ENCODE measurements at regions of chr2 and their contacts with region 1.

Region 1: DNA sequence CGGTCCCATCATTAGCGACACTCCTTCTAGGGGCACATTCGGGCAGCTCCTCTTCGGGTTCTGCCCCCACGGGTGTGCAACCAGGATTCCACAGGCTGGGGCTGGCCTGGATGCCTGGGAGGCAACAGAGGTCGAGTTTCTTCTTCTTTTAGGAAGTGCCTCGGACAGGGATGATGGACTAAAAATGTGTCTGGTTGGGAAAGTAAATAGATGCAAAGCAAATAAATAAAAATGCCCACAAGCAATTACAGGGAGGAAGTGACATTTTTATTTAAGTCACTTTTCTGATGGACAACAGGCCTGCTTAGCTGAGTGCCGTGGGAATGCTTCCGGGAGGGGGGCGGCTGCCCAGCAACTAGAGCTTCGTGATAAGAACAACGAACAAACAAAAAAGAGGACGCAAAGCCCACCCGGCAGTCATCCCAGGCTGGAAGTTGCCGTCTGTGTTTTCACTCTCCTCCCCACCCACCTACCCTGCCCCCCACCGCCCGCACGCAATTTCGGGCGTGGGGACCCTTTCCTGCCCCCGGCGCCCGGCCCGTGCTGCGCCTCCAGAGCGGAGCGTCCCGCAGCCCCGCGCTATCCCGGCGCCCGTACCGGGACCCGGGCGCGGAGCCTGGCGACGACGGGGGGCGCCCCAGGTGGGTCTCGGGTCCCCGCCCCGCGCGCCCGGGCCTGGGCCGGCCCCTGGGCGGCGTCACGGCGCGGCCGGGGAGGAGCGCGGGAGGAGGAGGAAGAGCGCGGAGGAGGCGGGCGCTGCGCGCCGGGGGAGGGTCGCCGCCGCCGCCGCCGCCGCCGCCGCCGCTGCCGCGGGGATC is 412 bp upstream of the NCK2 start:
- DNase-seq: peak; percentile 79
- ATAC-seq: peak; percentile 86
- H3K4me3 Mint-ChIP-seq: peak overlapping the region; percentile 86
- H3K27ac Mint-ChIP-seq: peak overlapping the region; percentile 86
- H3K4me1 Mint-ChIP-seq: peaks cover 76% of the 10 kb centered on the region
- H3K27me3 Mint-ChIP-seq: no peaks in the 10 kb centered on the region
- CTCF ChIP-seq: no peak

Region 2: GRCh38 chr2:105337124-105338019 is 406.9 kb before region 1 on chr2 and contains the start of gene C2orf49:
- CTCF ChIA-PET with region 1: no interaction called
- POLR2A ChIA-PET with region 1: no interaction called
- intact Hi-C with region 1: loop called (anchors 5 kb)
- DNase-seq: peak; percentile 89
- ATAC-seq: peak; percentile 93
- H3K4me3 Mint-ChIP-seq: peak within 1 kb of the TSS; percentile 100
- H3K27ac Mint-ChIP-seq: peak within 1 kb of the TSS; percentile 100
- H3K4me1 Mint-ChIP-seq: peaks cover 32% of the 10 kb centered on the region
- H3K27me3 Mint-ChIP-seq: no peaks in the 10 kb centered on the region
- CTCF ChIP-seq: no peak
- total RNA-seq, gene C2orf49: 20.0 and 23.8 TPM in 2 replicates

Region 3: GRCh38 chr2:105732101-105732500 is 12.2 kb before region 1 on chr2:
- CTCF ChIA-PET with region 1: no interaction called
- POLR2A ChIA-PET with region 1: no interaction called
- intact Hi-C with region 1: no loop called
- DNase-seq: no peak
- ATAC-seq: no peak
- H3K4me3 Mint-ChIP-seq: no peak overlapping the region
- H3K27ac Mint-ChIP-seq: no peak overlapping the region
- H3K4me1 Mint-ChIP-seq: peaks cover 55% of the 10 kb centered on the region
- H3K27me3 Mint-ChIP-seq: no peaks in the 10 kb centered on the region
- CTCF ChIP-seq: no peak

Region 4: DNA sequence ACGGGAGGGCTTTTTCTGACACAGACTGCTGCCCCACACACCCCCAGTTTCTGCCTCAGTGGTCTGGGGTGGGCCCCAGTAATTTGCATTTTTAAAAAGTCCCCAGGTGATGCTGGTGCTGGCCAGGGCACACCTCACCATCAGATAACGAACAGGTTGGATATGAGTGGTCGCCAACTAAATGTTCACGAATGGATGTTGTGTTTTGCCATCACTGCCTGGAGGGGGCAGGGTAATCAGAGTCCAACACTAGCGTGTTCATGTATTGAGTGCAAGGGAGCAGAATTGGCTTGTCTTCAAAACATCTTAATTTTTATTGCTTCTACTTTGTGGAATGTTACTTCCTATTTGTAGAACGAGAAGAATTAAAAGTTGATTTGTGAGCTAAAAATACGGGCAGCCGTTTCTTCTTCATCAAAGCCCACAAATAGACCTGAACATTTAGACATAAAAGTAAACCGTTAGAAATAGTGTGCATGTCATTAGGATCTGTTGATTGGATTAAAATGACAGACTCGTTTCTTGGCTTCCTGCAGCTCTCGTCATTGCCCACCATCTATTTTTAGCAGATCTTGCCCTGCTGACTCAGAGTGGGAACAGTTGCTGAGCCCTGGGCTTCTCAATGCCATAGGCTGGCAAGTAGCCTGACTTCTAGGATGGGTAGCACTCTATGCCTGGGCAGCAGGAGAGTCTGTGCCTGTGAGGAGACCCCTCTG is 45.6 kb after region 1 on chr2:
- CTCF ChIA-PET with region 1: interaction called, 5 read pairs
- POLR2A ChIA-PET with region 1: interaction called, 17 read pairs
- intact Hi-C with region 1: no loop called
- DNase-seq: no peak
- ATAC-seq: peak; percentile 81
- H3K4me3 Mint-ChIP-seq: peak overlapping the region; percentile 64
- H3K27ac Mint-ChIP-seq: peak overlapping the region; percentile 84
- H3K4me1 Mint-ChIP-seq: peaks cover 90% of the 10 kb centered on the region
- H3K27me3 Mint-ChIP-seq: no peaks in the 10 kb centered on the region
- CTCF ChIP-seq: no peak

Region 5: GRCh38 chr2:105802587-105802986 is 58.3 kb after region 1 on chr2:
- CTCF ChIA-PET with region 1: interaction called, 3 read pairs
- POLR2A ChIA-PET with region 1: interaction called, 25 read pairs
- intact Hi-C with region 1: loop called (anchors 1 kb)
- DNase-seq: peak; percentile 41
- ATAC-seq: peak; percentile 87
- H3K4me3 Mint-ChIP-seq: peak overlapping the region; percentile 65
- H3K27ac Mint-ChIP-seq: peak overlapping the region; percentile 90
- H3K4me1 Mint-ChIP-seq: peaks cover 93% of the 10 kb centered on the region
- H3K27me3 Mint-ChIP-seq: no peaks in the 10 kb centered on the region
- CTCF ChIP-seq: no peak

Region 6: GRCh38 chr2:105873721-105874120 is 129.4 kb after region 1 on chr2:
- CTCF ChIA-PET with region 1: no interaction called
- POLR2A ChIA-PET with region 1: interaction called, 9 read pairs
- intact Hi-C with region 1: loop called (anchors 1 kb)
- DNase-seq: peak; percentile 53
- ATAC-seq: peak; percentile 93
- H3K4me3 Mint-ChIP-seq: peak overlapping the region; percentile 59
- H3K27ac Mint-ChIP-seq: peak overlapping the region; percentile 75
- H3K4me1 Mint-ChIP-seq: peaks cover 92% of the 10 kb centered on the region
- H3K27me3 Mint-ChIP-seq: no peaks in the 10 kb centered on the region
- CTCF ChIP-seq: no peak

Region 7: GRCh38 chr2:106193977-106194778 is 449.9 kb after region 1 on chr2 and contains the start of gene UXS1:
- CTCF ChIA-PET with region 1: no interaction called
- POLR2A ChIA-PET with region 1: no interaction called
- intact Hi-C with region 1: loop called (anchors 2 kb)
- DNase-seq: peak; percentile 98
- ATAC-seq: peak; percentile 81
- H3K4me3 Mint-ChIP-seq: peak within 1 kb of the TSS; percentile 95
- H3K27ac Mint-ChIP-seq: peak within 1 kb of the TSS; percentile 91
- H3K4me1 Mint-ChIP-seq: peaks cover 42% of the 10 kb centered on the region
- H3K27me3 Mint-ChIP-seq: no peaks in the 10 kb centered on the region
- CTCF ChIP-seq: no peak
- total RNA-seq, gene UXS1: 20.0 and 24.2 TPM in 2 replicates